Sciatic nerve (tissue), 2 donors: ENCODE measurements at regions of chr9 and their contacts with region 1.

Region 1: DNA sequence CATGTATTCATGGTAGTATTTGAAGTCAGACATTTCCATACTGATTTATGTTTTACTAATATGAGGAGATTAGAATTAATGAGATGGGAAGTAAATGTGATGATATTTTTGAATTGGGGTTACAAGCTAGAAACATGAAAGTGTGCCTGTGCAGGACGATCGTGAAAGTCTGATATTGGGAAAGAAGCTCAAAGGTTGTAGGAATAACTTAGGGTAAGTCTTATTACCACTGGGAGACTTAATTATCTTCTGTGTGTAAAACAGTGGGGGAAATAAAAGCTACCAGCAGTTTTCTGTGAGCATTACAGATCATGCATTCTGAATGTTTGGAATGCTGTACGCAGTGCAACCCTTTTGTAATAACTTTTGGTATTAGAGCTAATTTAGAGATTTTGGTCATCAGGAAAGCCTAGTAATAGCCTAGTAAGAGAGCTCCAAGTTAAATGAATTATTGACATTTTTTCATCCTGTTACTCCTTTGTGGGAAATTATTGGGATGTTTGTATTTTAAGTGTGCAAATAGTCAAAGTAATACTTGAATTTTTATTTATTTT is 153.9 kb downstream of the PCSK5 start:
- DNase-seq: no peak
- ATAC-seq: no peak

Region 2: GRCh38 chr9:75844321-75844720 is 200.0 kb before region 1 on chr9:
- intact Hi-C with region 1: no loop called
- DNase-seq: no peak
- ATAC-seq: no peak

Region 3: DNA sequence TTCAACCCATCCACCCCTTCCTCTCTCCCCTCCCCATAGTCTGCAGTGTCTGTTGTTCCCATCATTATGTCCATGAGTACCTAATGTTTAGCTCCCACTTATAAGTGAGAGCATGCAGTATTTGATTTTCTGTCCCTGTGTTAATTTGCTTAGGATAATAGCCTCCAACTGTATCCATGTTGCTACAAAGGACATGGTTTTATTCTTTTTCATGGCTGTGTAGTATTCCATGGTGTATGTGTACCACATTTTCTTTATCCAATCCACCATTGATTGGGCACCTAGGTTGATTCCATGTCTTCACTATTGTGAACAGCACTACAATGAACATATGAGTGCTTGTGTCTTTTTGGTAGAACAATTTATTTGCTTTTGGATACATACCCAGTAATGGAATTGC is 33.2 kb after region 1 on chr9:
- intact Hi-C with region 1: loop called (anchors 1 kb)
- DNase-seq: no peak
- ATAC-seq: no peak

Region 4: GRCh38 chr9:76342862-76343261 is 298.5 kb after region 1 on chr9:
- intact Hi-C with region 1: no loop called
- DNase-seq: no peak
- ATAC-seq: no peak